ENCODE measurements at regions of chr21 and their contacts with region 1.

Region 1: DNA sequence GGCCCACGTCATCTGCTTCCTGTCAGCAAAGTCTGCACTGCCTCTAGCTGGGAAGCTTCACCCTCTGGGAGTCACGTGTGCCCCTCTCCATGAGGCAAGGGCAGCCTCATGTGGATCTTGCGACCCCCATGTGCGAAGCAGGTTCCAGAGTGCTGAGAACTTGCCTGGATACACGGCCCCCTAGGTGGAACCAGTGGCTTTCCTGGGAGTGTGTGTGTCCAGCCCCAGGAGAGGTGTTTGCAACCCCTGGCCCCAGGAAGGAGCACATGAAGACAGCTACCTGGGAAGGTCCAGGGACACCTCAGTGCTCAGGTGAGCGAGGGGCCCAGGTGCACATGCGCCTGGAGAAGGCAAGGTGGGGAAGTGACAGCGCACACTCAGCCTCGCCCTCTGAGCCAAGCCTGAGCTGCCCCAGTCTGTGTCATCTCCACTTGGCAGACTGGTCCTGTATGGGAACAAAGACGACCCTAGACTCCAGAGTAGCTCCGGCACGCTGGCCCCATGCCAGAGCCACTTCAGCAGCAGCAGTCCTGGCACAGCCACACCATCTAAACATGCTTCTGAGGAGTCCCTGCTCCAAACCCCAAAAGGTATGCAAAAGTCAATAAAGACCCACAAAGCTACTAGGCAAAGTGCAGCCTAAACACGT is 8.9 kb downstream of the LSS start:
- DNase-seq: no peak
- H3K4me3 ChIP-seq: no peak overlapping the region
- H3K27ac ChIP-seq: no peak overlapping the region
- H3K4me1 ChIP-seq: peaks cover 2% of the 10 kb centered on the region
- H3K27me3 ChIP-seq: no peaks in the 10 kb centered on the region
- CTCF ChIP-seq: no peak

Region 2: DNA sequence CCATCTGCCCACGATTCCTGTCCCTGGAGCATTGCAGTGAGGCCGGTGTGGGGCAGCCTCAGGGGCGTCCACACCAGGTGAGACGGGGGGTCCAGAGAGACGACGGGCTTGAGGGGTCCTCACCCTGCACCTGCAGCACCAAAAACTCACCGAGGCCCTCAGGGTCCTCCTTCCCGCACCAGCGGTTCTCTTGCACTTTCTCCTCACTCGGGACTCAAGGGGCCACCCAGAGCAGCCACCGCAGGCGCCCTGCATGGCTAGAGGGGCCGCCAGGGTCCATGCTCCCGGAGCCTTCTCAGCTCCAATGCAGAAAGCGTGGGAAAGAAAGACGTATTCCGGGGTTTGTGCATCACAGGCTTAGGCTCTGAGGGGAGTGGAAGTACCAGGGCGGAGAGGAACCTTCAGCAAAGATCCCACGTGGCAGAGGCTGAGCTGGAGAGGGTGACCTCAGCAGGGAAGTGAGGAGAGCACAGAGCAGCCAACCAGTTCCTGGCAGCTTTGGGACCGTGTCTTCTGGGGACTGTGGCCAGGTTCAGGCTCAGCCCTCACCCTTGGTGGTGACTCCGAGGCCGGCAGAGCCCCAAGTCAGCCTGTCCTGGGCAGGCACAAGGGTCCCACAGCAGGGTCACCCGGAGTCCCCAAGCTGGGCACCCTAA is 141.3 kb before region 1 on chr21:
- CTCF ChIA-PET with region 1: no interaction called
- dilution Hi-C with region 1: no loop called
- in situ Hi-C with region 1: no loop called
- intact Hi-C with region 1: no loop called
- DNase-seq: no peak
- H3K4me3 ChIP-seq: no peak overlapping the region
- H3K27ac ChIP-seq: no peak overlapping the region
- H3K4me1 ChIP-seq: no peaks in the 10 kb centered on the region
- H3K27me3 ChIP-seq: peaks cover 2% of the 10 kb centered on the region
- CTCF ChIP-seq: no peak

Region 3: GRCh38 chr21:46124926-46125855 is 94.5 kb before region 1 on chr21:
- CTCF ChIA-PET with region 1: no interaction called
- dilution Hi-C with region 1: loop called (anchors 5 kb)
- in situ Hi-C with region 1: no loop called
- intact Hi-C with region 1: no loop called
- DNase-seq: no peak
- H3K4me3 ChIP-seq: no peak overlapping the region
- H3K27ac ChIP-seq: no peak overlapping the region
- H3K4me1 ChIP-seq: no peaks in the 10 kb centered on the region
- H3K27me3 ChIP-seq: no peaks in the 10 kb centered on the region
- CTCF ChIP-seq: no peak

Region 4: DNA sequence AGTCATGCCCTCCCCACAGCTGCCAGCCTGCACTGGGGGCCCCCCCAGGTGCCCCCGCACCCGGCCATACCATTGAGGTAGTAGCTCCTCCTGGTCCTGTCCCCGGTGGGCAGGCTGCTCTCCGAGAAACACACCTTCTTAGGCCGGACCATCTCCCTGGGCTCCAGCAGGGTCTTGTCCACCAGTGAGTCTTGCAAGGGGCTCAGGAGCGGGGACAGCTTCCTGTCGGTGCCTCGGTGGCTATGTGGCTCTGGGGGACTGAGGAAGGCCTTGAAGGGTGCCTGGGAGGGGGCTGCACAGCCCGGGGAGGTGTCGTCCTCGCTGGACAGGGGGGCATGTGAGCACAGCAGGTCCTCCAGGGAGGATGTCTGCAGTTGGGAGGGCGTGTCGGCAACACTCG is 51.5 kb before region 1 on chr21:
- CTCF ChIA-PET with region 1: no interaction called
- dilution Hi-C with region 1: loop called (anchors 5 kb)
- in situ Hi-C with region 1: no loop called
- intact Hi-C with region 1: no loop called
- DNase-seq: no peak
- H3K4me3 ChIP-seq: no peak overlapping the region
- H3K27ac ChIP-seq: no peak overlapping the region
- H3K4me1 ChIP-seq: no peaks in the 10 kb centered on the region
- H3K27me3 ChIP-seq: no peaks in the 10 kb centered on the region
- CTCF ChIP-seq: no peak

Region 5: DNA sequence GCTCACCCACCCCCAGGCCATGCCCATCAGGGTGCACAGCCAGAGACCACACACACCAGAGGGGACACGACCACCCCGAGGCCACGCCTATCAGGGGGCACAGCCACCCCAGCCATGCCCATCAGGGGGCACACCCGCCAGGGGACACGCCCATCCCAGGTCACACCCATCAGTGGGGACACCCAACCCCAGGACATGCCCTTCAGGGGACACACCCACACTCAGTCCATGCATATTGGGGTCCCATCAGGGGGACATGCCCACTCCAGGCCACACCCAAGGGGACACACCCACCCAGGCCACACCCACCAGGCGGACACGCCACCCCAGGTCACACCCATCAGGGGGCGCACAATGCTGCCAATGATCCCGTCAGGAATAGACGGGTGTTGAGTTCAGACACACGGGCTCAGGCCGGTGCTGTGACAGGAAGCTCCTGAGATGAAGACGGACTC is 45.0 kb after region 1 on chr21:
- CTCF ChIA-PET with region 1: no interaction called
- dilution Hi-C with region 1: loop called (anchors 5 kb)
- in situ Hi-C with region 1: no loop called
- intact Hi-C with region 1: no loop called
- DNase-seq: no peak
- H3K4me3 ChIP-seq: no peak overlapping the region
- H3K27ac ChIP-seq: no peak overlapping the region
- H3K4me1 ChIP-seq: no peaks in the 10 kb centered on the region
- H3K27me3 ChIP-seq: no peaks in the 10 kb centered on the region
- CTCF ChIP-seq: no peak

Region 6: DNA sequence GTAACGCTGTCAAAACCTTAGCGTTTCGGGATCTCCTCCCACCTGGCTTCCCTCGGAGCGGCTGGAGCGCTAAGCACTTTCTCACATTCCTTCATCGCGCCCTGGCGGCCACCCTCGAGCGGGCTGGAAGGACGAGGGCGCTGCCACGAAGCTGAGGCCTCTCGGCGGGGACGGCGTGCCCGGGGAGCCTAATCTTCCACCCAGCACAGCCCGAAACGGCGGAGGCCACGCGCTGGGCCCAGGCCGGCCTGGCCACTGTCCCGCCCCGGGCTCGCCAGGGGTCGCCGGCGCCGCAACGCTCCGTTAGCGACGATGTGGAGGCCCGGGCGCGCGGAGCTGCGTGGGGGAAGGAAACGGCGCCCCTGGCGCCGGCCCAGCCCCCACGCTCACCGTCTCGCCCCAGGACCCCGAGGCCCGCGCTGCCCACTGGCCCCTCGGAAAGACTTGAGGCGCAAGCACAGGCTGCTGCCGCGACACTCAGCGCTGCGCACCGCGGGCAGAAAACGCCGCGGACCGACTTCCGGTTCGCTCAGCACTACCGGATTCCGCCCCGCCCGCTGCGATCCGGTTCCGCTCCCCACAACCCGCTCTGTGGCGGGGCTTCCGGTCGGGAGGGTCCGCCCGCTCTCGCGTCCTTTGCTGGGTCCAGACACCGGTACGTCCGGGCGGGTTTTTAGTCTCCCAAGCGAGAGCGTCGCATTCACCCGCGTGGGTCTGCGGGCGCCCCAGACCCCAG is 66.2 kb after region 1 on chr21 and contains the start of gene YBEY:
- CTCF ChIA-PET with region 1: no interaction called
- dilution Hi-C with region 1: no loop called
- in situ Hi-C with region 1: no loop called
- intact Hi-C with region 1: no loop called
- DNase-seq: peak; percentile 91
- H3K4me3 ChIP-seq: peak within 1 kb of the TSS; percentile 73 to 90 (median 76)
- H3K27ac ChIP-seq: peak within 1 kb of the TSS; percentile 70
- H3K4me1 ChIP-seq: peaks cover 25% of the 10 kb centered on the region
- H3K27me3 ChIP-seq: no peaks in the 10 kb centered on the region
- CTCF ChIP-seq: peak; percentile 13 to 48
- total RNA-seq, gene YBEY: 9.0 to 12.3 TPM

Region 7: GRCh38 chr21:46564391-46564790 is 344.7 kb after region 1 on chr21:
- CTCF ChIA-PET with region 1: no interaction called
- dilution Hi-C with region 1: no loop called
- in situ Hi-C with region 1: no loop called
- intact Hi-C with region 1: no loop called
- DNase-seq: no peak
- H3K4me3 ChIP-seq: no peak overlapping the region
- H3K27ac ChIP-seq: no peak overlapping the region
- H3K4me1 ChIP-seq: no peaks in the 10 kb centered on the region
- H3K27me3 ChIP-seq: no peaks in the 10 kb centered on the region
- CTCF ChIP-seq: no peak